PC-3 (cell line): ENCODE measurements at regions of chr6 and their contacts with region 1.

Region 1: GRCh38 chr6:90631046-90631445 is 44.2 kb upstream of the MAP3K7 start:
- DNase-seq: peak; percentile 2
- ATAC-seq: no peak
- H3K4me3 ChIP-seq: no peak overlapping the region
- H3K27ac ChIP-seq: no peak overlapping the region
- H3K4me1 ChIP-seq: no peaks in the 10 kb centered on the region
- H3K27me3 ChIP-seq: peaks cover 3% of the 10 kb centered on the region; the same call in 1 of the 2 replicates
- CTCF ChIP-seq: no peak; the same call in 1 of the 2 replicates

Region 2: DNA sequence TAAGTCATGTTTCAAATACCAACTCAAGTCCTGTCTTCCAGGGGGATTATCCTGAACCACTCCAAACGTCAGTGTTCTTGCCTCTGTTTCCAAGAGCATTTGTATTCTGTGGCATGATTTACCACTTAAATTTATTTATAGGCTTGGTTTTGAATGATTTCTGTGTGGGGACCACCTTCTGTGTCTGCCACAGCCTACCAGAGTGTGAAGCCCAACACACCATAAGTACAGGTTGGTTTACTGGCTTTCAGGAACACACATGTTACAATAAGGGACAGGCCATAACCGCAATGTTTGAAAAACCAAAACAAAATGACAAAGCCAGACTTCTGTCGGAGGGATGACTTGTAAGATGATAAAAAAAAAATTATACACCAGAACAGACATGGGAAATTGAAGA is 12.3 kb after region 1 on chr6:
- CTCF ChIA-PET with region 1: no interaction called
- POLR2A ChIA-PET with region 1: no interaction called
- intact Hi-C with region 1: no loop called
- DNase-seq: no peak
- ATAC-seq: no peak
- H3K4me3 ChIP-seq: no peak overlapping the region
- H3K27ac ChIP-seq: no peak overlapping the region
- H3K4me1 ChIP-seq: peaks cover 24% of the 10 kb centered on the region
- H3K27me3 ChIP-seq: no peaks in the 10 kb centered on the region
- CTCF ChIP-seq: no peak

Region 3: GRCh38 chr6:90860822-90861601 is 230.0 kb after region 1 on chr6:
- CTCF ChIA-PET with region 1: no interaction called
- POLR2A ChIA-PET with region 1: no interaction called
- intact Hi-C with region 1: loop called (anchors 1 kb)
- DNase-seq: peak; percentile 10
- ATAC-seq: no peak
- H3K4me3 ChIP-seq: no peak overlapping the region
- H3K27ac ChIP-seq: no peak overlapping the region
- H3K4me1 ChIP-seq: no peaks in the 10 kb centered on the region
- H3K27me3 ChIP-seq: peaks cover 12% of the 10 kb centered on the region; the same call in 1 of the 2 replicates
- CTCF ChIP-seq: peak; percentile 39